HEK293 (cell line): ENCODE measurements at regions of chr1 and their contacts with region 1.

Region 1: DNA sequence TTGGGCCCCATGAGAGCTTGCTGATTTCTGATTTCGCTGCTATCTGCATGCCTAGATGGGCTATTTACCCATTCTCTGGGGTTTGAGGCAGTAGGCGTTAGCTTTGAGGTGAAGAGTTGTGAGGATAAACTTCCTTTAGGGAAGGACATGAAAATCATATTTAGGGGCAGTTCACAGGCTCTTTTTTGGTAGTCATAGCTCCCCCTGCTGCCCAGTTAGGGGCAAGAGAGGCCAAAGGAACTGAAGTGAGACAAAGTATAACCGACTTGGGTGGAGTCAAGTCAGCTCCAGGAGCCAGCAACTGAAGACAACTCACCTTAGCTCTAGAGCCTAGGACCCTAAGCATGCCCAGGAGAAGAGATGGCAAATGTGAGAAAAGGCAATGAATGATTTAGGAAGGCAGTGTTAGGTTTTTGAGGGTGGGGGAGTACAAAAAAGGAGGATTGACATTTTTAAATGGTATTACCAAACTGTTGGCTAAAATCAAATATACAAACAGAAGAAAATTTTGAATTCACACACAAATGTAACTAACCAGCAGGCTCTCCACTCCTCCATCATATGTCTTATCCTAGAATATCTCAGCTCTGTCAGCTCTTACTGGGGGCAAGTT is 625.2 kb downstream of the LMO4 start:
- H3K4me3 ChIP-seq: no peak overlapping the region
- H3K27ac ChIP-seq: no peak overlapping the region
- H3K4me1 ChIP-seq: no peaks in the 10 kb centered on the region
- CTCF ChIP-seq: peak; percentile 59

Region 2: DNA sequence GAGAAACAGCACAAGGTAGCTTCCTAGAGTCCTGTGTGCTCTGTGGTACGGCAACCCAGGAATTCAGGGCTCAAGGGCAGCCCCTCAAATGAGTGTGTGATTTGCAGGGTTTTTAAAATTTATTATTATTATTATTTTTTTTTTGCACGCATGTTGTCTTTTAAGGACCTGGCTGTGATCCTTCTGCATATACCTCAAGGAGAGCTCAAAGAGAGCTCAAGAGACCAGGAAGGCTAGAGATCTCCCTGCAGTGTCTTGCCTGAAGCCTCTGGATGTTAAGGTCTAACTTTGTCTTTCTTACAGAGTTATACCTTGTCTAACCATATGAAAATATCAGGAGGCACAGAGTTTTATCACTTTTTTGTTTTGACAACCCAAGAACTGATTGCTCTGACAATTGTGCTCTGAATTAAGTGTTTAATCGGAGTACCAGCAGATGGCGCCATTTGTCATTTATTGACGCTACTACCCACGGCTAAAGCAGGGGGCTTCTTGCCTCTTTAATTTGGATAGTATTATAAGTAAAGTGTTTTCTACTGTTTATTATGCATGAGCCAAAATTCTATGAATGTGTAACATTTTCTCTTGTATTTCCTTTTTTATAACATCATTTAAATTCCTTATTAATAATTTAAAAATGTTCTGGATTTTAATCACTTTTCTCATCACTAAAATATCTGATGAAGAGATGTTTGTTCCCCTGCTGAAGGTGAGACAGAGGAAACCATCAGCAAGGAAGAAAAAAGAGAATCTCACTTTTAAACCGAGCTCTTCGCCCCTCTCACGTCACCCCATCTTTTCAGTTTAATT is 660.9 kb before region 1 on chr1:
- CTCF ChIA-PET with region 1: interaction called, 12 read pairs
- POLR2A ChIA-PET with region 1: no interaction called
- H3K4me3 ChIP-seq: no peak overlapping the region
- H3K27ac ChIP-seq: no peak overlapping the region
- H3K4me1 ChIP-seq: no peaks in the 10 kb centered on the region
- CTCF ChIP-seq: peak; percentile 57

Region 3: GRCh38 chr1:87787551-87787950 is 166.3 kb before region 1 on chr1:
- CTCF ChIA-PET with region 1: interaction called, 10 read pairs
- POLR2A ChIA-PET with region 1: no interaction called
- H3K4me3 ChIP-seq: no peak overlapping the region
- H3K27ac ChIP-seq: no peak overlapping the region
- H3K4me1 ChIP-seq: no peaks in the 10 kb centered on the region
- CTCF ChIP-seq: no peak

Region 4: GRCh38 chr1:88378566-88378965 is 424.7 kb after region 1 on chr1:
- CTCF ChIA-PET with region 1: no interaction called
- POLR2A ChIA-PET with region 1: no interaction called
- H3K4me3 ChIP-seq: no peak overlapping the region
- H3K27ac ChIP-seq: no peak overlapping the region
- H3K4me1 ChIP-seq: no peaks in the 10 kb centered on the region
- CTCF ChIP-seq: no peak